MCF 10A (cell line): ENCODE measurements at regions of chr2 and their contacts with region 1.

Region 1: DNA sequence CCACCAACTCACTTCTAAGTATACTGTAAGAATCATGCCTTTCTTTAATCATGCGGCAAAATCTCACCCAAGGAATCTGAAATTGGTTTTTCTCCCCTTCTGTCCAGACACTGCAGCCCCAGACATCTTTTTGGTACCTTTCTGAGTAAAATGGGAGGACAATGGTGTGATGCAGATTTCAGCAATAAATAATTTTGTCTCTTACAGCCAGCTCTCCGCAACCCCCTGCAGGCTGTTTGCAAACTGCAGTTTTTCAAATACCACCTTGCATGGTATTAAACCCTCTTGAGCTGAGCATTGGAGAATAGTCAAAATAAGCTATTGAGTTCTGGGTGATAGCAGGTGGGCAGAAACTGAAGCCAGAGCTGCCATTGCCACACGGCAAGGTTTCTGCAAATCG is 32.2 kb downstream of the GPR39 start:
- DNase-seq: peak; percentile 55
- H3K4me3 Mint-ChIP-seq: no peak overlapping the region
- H3K27ac Mint-ChIP-seq: no peak overlapping the region
- H3K4me1 Mint-ChIP-seq: peaks cover 6% of the 10 kb centered on the region
- H3K27me3 Mint-ChIP-seq: no peaks in the 10 kb centered on the region
- CTCF ChIP-seq: peak; percentile 49

Region 2: DNA sequence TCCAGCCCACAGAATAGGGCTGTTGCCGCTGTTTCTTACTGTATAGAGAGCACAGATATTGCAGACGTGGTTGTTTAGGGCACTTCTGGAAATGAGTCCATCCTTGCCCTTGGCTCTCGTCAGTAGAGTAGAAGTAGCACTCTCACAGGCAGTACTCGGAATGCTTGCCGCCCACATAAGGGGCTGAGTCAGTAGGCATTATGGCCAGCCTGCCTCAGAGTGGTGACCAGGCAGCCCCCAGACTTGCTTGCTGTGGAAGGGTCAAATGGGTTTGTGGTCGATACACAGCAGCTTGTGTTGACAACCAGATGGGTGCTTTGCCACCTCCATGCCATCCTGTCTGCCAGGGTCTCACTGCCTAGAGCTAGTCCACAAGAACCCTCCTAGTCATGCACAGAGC is 1305.0 kb before region 1 on chr2:
- CTCF ChIA-PET with region 1: no interaction called
- POLR2A ChIA-PET with region 1: no interaction called
- intact Hi-C with region 1: no loop called
- DNase-seq: no peak
- H3K4me3 Mint-ChIP-seq: no peak overlapping the region
- H3K27ac Mint-ChIP-seq: no peak overlapping the region
- H3K4me1 Mint-ChIP-seq: no peaks in the 10 kb centered on the region
- H3K27me3 Mint-ChIP-seq: no peaks in the 10 kb centered on the region
- CTCF ChIP-seq: no peak

Region 3: DNA sequence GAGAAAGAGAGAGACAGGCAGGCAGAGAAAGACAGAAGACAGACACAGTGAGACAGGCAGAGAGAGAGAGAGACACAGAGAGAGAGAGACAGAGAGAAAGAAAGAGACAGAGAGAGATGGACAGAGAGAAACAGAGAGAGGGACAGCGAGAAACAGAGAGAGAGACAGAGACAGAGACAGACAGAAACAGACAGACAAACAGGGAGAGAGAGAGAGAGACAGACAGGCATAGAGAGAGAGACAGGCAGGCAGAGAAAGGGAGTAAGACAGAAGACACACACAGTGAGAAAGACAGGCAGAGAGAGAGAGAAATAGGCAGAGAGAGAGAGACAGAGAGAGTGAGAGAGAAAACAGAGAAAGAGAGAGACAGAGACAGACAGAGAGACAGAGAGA is 181.7 kb before region 1 on chr2:
- CTCF ChIA-PET with region 1: interaction called, 4 read pairs
- POLR2A ChIA-PET with region 1: no interaction called
- intact Hi-C with region 1: loop called (anchors 2 kb)
- DNase-seq: no peak
- H3K4me3 Mint-ChIP-seq: no peak overlapping the region
- H3K27ac Mint-ChIP-seq: no peak overlapping the region
- H3K4me1 Mint-ChIP-seq: no peaks in the 10 kb centered on the region
- H3K27me3 Mint-ChIP-seq: no peaks in the 10 kb centered on the region
- CTCF ChIP-seq: no peak

Region 4: GRCh38 chr2:132400169-132400900 is 48.4 kb before region 1 on chr2:
- CTCF ChIA-PET with region 1: interaction called, 14 read pairs
- POLR2A ChIA-PET with region 1: interaction called, 8 read pairs
- intact Hi-C with region 1: loop called (anchors 1 kb)
- DNase-seq: peak; percentile 85
- H3K4me3 Mint-ChIP-seq: no peak overlapping the region
- H3K27ac Mint-ChIP-seq: no peak overlapping the region
- H3K4me1 Mint-ChIP-seq: peaks cover 15% of the 10 kb centered on the region
- H3K27me3 Mint-ChIP-seq: no peaks in the 10 kb centered on the region
- CTCF ChIP-seq: peak; percentile 15

Region 5: DNA sequence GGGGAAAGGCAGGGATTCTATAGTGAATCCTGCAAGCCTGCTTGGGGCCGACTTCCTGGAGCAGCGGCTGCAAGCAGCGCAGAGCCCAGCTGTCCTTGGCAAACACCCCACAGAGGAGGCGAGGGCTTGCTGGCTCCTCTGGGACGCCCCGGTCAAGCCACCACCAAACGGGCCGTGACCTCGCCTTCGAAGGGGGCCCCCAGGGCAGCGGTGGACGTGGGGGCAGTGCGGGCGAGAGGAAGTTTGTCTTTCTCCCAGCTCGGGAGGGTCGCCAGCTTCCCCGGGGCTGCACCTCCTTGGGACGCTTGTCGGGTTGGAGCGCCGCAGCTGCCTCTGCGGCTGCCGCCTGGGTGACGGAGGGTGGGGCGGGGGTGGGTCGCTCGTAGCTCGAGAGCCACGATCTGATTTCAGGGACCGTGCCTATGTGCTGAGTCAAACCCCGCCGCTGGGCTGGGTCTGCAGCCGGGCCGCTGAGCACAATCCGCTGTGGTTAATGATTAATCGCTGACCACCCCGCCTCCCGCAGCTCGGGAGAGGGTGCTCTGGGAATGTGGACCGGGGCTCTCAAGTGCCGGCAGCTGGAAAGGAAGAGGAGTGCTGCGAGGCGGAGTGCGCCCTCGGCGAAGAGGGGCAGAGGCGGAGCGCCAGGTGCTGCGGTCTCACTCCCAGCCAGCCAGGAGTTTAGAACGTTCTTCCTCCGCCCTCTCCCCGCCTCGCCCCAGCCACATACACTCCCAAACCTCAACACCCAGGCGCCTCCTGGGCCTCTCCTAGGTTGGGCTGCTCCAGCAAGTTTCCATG is 32.5 kb before region 1 on chr2 and contains the start of gene GPR39:
- CTCF ChIA-PET with region 1: interaction called, 3 read pairs
- POLR2A ChIA-PET with region 1: no interaction called
- intact Hi-C with region 1: loop called (anchors 2 kb)
- DNase-seq: peak; percentile 98
- H3K4me3 Mint-ChIP-seq: peak within 1 kb of the TSS; percentile 78
- H3K27ac Mint-ChIP-seq: peak within 1 kb of the TSS; percentile 91
- H3K4me1 Mint-ChIP-seq: peaks cover 43% of the 10 kb centered on the region
- H3K27me3 Mint-ChIP-seq: no peaks in the 10 kb centered on the region
- CTCF ChIP-seq: no peak
- total RNA-seq, gene GPR39: 7.2 and 7.7 TPM in 2 replicates

Region 6: DNA sequence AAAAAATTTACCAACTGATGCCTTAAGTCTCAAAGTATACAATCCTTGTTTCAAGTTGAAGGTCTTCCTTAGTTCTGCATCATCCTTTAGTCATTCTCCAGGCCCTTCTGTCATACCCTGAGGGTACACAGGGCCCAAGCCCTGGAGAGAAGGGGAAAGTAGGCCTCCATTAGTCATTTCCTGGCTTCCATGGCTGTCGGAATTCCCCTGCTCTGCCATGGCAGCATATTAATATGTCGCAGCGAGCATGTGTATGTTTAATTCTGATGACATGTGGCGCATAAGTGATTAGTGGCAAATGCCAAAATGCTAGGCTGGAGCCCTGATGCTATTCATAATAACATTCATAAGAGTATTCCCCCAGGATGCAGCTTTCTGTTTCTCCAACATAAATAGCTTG is 10.1 kb before region 1 on chr2:
- CTCF ChIA-PET with region 1: interaction called, 29 read pairs
- POLR2A ChIA-PET with region 1: interaction called, 5 read pairs
- intact Hi-C with region 1: no loop called
- DNase-seq: peak; percentile 97
- H3K4me3 Mint-ChIP-seq: peak overlapping the region; percentile 55
- H3K27ac Mint-ChIP-seq: peak overlapping the region; percentile 95
- H3K4me1 Mint-ChIP-seq: peaks cover 33% of the 10 kb centered on the region
- H3K27me3 Mint-ChIP-seq: no peaks in the 10 kb centered on the region
- CTCF ChIP-seq: no peak

Region 7: DNA sequence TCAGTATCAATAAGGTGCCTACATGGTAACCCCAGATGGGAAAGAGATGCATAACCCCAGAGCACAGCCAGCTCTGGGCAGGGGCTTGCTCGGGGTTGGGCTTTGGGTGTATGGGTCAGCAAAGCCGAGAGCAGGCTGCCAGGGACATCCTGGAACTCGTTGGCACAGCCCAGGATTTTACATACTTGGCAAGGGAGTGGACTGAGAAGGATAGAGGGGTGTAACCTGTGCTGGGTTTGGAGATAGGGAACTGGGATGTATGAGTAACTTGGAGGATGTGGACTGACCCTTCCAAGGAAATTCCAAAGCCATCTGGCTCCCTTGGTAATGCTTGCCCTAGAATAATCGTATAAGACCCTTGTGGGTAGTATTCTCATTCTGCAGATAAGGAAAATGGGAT is 12.0 kb after region 1 on chr2:
- CTCF ChIA-PET with region 1: interaction called, 11 read pairs
- POLR2A ChIA-PET with region 1: interaction called, 3 read pairs
- intact Hi-C with region 1: no loop called
- DNase-seq: peak; percentile 20
- H3K4me3 Mint-ChIP-seq: no peak overlapping the region
- H3K27ac Mint-ChIP-seq: no peak overlapping the region
- H3K4me1 Mint-ChIP-seq: peaks cover 8% of the 10 kb centered on the region
- H3K27me3 Mint-ChIP-seq: no peaks in the 10 kb centered on the region
- CTCF ChIP-seq: no peak

Region 8: GRCh38 chr2:132477962-132478361 is 29.2 kb after region 1 on chr2:
- CTCF ChIA-PET with region 1: no interaction called
- POLR2A ChIA-PET with region 1: no interaction called
- intact Hi-C with region 1: no loop called
- DNase-seq: no peak
- H3K4me3 Mint-ChIP-seq: no peak overlapping the region
- H3K27ac Mint-ChIP-seq: no peak overlapping the region
- H3K4me1 Mint-ChIP-seq: no peaks in the 10 kb centered on the region
- H3K27me3 Mint-ChIP-seq: no peaks in the 10 kb centered on the region
- CTCF ChIP-seq: no peak